GM10248 (cell line): ENCODE measurements at regions of chr12 and their contacts with region 1.

Region 1: GRCh38 chr12:22505826-22506225 is 38.5 kb downstream of the C2CD5 start:
- DNase-seq: no peak
- CTCF ChIP-seq: no peak

Region 2: GRCh38 chr12:22034709-22035506 is 470.9 kb before region 1 on chr12:
- CTCF ChIA-PET with region 1: no interaction called
- POLR2A ChIA-PET with region 1: no interaction called
- DNase-seq: no peak
- CTCF ChIP-seq: no peak

Region 3: DNA sequence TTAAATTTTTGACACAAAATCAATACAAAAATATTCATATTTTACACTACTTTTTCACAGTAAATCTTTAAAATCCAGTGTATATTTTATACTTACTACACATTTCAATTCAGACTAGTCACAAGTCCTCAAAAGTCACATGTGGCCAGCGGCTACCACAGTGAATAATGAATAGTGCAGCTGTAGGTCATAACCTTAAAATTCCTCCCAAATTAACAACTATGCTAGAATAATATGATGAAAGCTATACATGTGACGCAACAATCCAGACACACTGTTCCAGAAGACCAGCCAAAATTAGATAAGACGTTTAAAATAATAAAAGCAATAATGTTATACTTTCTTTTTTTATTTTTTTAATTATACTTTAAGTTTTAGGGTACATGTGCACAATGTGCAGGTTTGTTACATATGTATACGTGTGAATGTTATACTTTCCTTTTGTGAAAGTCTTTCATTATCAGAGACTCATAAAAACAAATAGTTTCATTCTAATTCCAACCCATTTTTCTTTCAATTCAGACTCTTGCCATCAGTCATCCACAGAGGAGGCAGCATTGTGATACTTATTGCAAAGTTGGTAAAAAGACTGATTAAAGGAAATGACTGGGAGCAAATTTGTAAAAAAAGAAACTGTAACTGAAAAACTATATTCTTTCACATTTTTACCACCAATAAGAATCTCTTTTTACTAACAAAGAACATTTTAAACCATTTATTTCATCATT is 28.5 kb before region 1 on chr12:
- CTCF ChIA-PET with region 1: no interaction called
- POLR2A ChIA-PET with region 1: no interaction called
- DNase-seq: no peak
- CTCF ChIP-seq: no peak

Region 4: DNA sequence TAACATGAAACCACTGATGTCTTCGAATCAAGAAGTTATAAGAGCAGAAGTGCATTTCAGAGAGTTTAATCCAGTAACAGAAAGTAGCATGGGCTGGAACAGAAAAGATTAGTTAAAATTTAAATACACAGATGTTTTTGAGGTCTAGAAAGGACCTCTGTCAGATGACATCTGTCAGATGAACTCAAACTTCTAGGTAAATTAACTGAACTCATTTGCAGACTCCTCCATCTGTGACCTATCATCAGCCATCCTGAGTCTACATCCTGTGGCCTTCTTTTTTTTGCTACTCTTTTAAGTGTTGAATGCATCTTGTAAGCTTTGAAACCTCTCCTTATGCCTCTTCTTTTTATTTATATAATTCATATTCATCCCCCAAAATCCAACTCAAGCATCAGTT is 14.8 kb before region 1 on chr12:
- CTCF ChIA-PET with region 1: interaction called, 11 read pairs
- POLR2A ChIA-PET with region 1: no interaction called
- DNase-seq: no peak
- CTCF ChIP-seq: no peak